Heart left ventricle (tissue), 16 donors: ENCODE measurements at regions of chr5 and their contacts with region 1.

Region 1: GRCh38 chr5:16544607-16545374 is 72.0 kb downstream of the RETREG1 start:
- DNase-seq: no peak
- ATAC-seq: peak; percentile 71 to 83 (median 79)
- H3K4me3 ChIP-seq: no peak overlapping the region
- H3K27ac ChIP-seq: peak overlapping the region; percentile 30 to 91 (median 79)
- H3K4me1 ChIP-seq: peaks cover 0 to 65% (median 20%) of the 10 kb centered on the region in 12 donors
- H3K27me3 ChIP-seq: no peaks in the 10 kb centered on the region
- CTCF ChIP-seq: no peak
- POLR2A ChIP-seq: peak in 1 of 2 donors; percentile 45

Region 2: DNA sequence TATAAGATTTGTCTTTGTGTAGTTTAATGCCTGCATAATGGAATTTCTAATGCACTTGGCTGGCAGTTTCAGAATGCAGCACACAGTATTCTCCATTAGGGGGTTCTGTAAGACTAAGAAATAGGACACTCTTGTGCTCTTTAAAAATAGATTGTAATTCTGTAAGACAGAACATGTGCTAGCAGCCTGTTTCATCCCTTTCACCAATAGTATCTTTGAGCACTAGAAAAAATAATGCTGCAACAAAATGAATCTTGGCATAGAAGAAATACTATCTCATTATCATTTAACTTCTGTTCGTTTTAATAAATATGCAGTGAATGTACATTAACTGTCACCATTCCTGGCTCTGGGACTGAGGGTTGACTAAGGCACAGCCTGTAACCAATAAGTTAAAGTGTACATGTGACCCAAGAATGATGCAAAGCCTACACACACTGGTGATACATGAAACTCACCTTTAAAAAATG is 55.4 kb before region 1 on chr5:
- intact Hi-C with region 1: loop called in 3 of 10 experiments (anchors 1 to 5 kb)
- DNase-seq: no peak
- ATAC-seq: peak; percentile 56 to 75 (median 72)
- H3K4me3 ChIP-seq: no peak overlapping the region
- H3K27ac ChIP-seq: peak overlapping the region in 9 of 12 donors; percentile 11 to 82 (median 78)
- H3K4me1 ChIP-seq: peaks cover 0 to 56% (median 20%) of the 10 kb centered on the region in 12 donors
- H3K27me3 ChIP-seq: no peaks in the 10 kb centered on the region
- CTCF ChIP-seq: peak; percentile 18 to 83 (median 70)
- POLR2A ChIP-seq: no peak

Region 3: DNA sequence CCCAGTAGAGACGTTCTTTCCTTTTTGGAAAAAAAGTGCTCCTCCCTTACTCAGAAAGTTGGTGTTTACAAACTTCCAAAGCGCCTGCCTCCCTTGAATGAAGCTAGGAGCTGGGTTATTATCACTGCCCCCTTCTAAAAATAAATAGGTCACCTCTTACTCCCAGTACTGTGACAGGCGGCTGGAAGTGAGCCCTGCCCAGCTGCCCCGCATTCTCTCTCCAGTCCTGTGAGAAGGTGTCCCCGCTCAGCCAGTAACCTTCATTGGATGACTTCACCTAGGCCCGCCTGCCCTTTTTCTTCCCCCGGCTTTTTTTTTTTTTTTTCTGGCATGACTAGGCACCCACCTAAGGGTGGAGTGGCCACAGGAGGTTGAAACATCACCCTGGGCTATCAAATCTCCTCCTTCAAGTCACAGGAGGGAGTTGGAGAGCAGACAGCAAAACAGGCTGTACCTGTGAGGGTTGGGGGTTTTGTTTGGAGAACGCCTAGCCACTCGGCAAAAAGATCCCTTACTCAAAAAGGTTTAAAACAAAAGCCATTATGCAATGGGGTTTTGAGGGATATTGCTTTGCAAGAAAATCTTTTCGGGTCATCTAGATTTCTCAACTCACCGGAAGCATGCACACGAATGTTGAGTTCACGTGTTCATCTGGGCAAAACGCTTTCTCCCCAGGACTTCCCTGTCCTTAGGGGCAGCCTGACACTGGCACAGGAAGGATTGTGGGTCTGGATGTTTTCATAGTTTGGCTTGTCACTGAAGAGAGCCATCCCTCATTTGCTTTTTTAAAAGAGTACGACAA is 35.9 kb before region 1 on chr5:
- intact Hi-C with region 1: loop called in 2 of 10 experiments (anchors 5 kb)
- DNase-seq: peak; percentile 77 to 89 (median 79)
- ATAC-seq: peak; percentile 92 to 94 (median 93)
- H3K4me3 ChIP-seq: peak overlapping the region; percentile 27 to 62 (median 50)
- H3K27ac ChIP-seq: peak overlapping the region; percentile 66 to 96 (median 85)
- H3K4me1 ChIP-seq: peaks cover 0 to 24% (median 7%) of the 10 kb centered on the region in 12 donors
- H3K27me3 ChIP-seq: no peaks in the 10 kb centered on the region
- CTCF ChIP-seq: no peak
- POLR2A ChIP-seq: peak; percentile 69 to 77

Region 4: DNA sequence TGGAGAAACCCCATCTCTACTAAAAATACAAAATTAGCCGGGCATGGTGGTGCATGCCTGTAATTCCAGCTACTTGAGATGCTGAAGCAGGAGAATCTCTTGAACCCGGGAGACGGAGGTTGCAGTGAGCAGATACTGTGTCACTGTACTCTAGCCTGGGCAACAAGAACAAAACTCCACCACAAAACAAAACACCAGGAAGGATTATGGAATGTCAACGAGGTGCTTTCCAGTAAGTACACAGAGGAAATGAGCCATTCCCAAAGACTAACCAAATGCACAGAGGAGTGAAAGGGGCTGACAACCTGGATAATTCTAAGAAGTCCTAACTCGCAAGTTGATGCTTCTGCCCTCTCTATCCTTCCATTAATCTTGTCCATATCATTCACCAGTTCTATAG is 198.1 kb after region 1 on chr5:
- intact Hi-C with region 1: no loop called
- DNase-seq: no peak
- ATAC-seq: no peak
- H3K4me3 ChIP-seq: no peak overlapping the region
- H3K27ac ChIP-seq: peak overlapping the region in 1 of 12 donors; percentile 51
- H3K4me1 ChIP-seq: peaks cover 0 to 23% (median 5%) of the 10 kb centered on the region in 12 donors
- H3K27me3 ChIP-seq: peaks cover 0 to 11% (median 0%) of the 10 kb centered on the region in 9 donors
- CTCF ChIP-seq: no peak
- POLR2A ChIP-seq: no peak

Region 5: DNA sequence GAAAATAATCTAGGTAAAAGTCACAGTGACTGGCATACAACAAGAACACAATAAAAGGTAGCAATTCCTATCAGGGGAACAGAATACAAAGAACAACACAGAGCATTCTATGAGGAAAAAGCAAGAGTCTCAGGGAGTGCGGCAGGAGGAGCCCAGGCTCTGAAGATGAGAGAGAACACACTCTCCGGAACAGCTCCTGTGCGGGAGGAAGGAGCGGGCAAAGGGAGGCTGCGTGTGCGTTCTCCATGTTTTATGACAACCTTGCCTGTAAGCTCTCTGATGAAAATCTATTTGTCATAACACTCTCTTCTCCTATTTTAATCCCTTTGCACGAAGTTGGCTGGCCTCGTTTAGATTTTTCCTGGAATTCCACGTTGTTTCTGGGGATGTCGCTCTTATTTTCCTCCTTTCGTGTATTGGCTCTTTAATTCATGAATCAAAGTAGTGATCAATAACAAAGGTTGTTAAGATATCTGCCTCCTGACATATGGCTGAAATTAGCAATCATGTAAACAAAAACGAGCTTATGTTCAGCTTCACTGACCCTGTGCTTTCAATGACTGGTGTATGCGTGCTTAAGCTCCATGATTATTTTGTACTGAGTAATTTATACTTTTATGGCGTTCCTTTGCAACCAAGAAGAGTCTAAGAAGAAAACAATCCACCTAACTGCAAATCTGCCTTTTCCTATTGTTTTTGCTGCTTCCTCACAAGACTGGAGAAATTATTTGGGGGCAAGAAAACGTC is 281.8 kb after region 1 on chr5:
- intact Hi-C with region 1: no loop called
- DNase-seq: no peak
- ATAC-seq: no peak
- H3K4me3 ChIP-seq: no peak overlapping the region
- H3K27ac ChIP-seq: no peak overlapping the region
- H3K4me1 ChIP-seq: peaks cover 0 to 7% (median 0%) of the 10 kb centered on the region in 12 donors
- H3K27me3 ChIP-seq: peaks cover 0 to 7% (median 0%) of the 10 kb centered on the region in 9 donors
- CTCF ChIP-seq: no peak
- POLR2A ChIP-seq: no peak